Pancreas (tissue), 10 donors: ENCODE measurements at regions of chr3 and their contacts with region 1.

Region 1: GRCh38 chr3:168213920-168214319 is 118.2 kb upstream of the GOLIM4 start:
- DNase-seq: no peak
- ATAC-seq: no peak
- H3K4me3 ChIP-seq: no peak overlapping the region
- H3K27ac ChIP-seq: no peak overlapping the region
- H3K4me1 ChIP-seq: no peaks in the 10 kb centered on the region
- H3K27me3 ChIP-seq: no peaks in the 10 kb centered on the region
- CTCF ChIP-seq: no peak

Region 2: DNA sequence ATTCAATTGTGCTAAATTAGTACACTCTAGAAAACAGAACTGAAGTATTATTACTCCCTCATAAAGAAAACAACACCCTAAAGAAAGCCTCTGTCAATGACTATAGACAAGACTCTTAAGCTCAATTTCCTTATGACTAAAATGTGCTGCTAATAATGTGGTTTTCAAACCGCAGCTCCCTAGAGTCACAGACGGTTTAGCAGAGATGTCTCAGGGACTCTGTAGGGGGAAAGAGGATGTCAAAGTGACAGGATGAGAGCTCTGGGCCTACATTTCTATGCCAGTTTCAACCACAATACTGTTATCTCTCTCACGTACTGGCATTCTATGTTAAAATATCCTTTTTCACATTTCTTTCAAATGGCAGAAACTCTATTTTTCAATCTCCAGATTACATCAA is 522.6 kb before region 1 on chr3:
- intact Hi-C with region 1: no loop called
- DNase-seq: no peak
- ATAC-seq: no peak
- H3K4me3 ChIP-seq: no peak overlapping the region
- H3K27ac ChIP-seq: no peak overlapping the region
- H3K4me1 ChIP-seq: peaks cover 0 to 4% (median 1%) of the 10 kb centered on the region in 3 donors
- H3K27me3 ChIP-seq: no peaks in the 10 kb centered on the region
- CTCF ChIP-seq: no peak

Region 3: GRCh38 chr3:168620826-168621225 is 406.9 kb after region 1 on chr3:
- intact Hi-C with region 1: loop called in 1 of 3 experiments (anchors 10 kb)
- DNase-seq: peak in 3 of 6 donors; percentile 14 to 26 (median 23)
- ATAC-seq: peak; percentile 48 to 91 (median 88)
- H3K4me3 ChIP-seq: no peak overlapping the region
- H3K27ac ChIP-seq: no peak overlapping the region
- H3K4me1 ChIP-seq: no peaks in the 10 kb centered on the region
- H3K27me3 ChIP-seq: no peaks in the 10 kb centered on the region
- CTCF ChIP-seq: peak in 3 of 4 donors; percentile 23 to 51 (median 37)

Region 4: DNA sequence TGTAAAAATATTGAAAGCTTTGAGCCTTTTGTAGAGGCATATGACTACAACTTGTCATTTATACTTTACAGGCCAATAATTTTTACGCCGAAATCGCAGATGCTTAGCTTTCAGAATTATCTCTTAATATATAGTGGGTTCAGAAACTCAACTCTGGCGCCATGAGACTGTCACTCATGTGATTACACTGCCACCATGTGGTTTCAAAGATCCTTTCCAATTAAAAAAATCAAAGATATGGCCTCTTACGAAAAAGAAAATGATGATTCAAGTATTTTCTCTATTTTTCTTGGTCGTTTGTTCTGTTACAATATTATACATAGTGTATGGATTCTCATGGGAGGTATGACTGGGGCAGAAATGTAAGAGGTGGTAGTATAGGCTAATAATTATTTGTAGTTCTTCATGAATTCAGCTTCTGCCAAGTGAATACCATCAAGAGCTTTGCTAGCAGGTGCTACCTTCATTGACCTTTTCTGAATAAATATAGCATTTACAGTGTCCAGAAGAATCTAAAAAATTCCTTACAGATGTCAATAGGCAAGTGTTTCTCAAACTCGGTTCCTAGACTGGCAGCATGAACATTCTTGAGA is 633.5 kb after region 1 on chr3:
- intact Hi-C with region 1: loop called in 1 of 3 experiments (anchors 5 kb)
- DNase-seq: peak in 1 of 6 donors; percentile 16
- ATAC-seq: peak; percentile 60 to 86 (median 80)
- H3K4me3 ChIP-seq: no peak overlapping the region
- H3K27ac ChIP-seq: no peak overlapping the region
- H3K4me1 ChIP-seq: no peaks in the 10 kb centered on the region
- H3K27me3 ChIP-seq: no peaks in the 10 kb centered on the region
- CTCF ChIP-seq: peak; percentile 40 to 56 (median 42)